Activated CD4-positive, alpha-beta memory T cell treated with anti-CD3 and anti-CD28 coated beads for 36 hours (primary cell): ENCODE measurements at regions of chr2 and their contacts with region 1.

Region 1: GRCh38 chr2:188524519-188525113 is 232.9 kb downstream of the GULP1 start:
- DNase-seq: peak; percentile 22
- H3K4me3 Mint-ChIP-seq: no peak overlapping the region
- H3K27ac Mint-ChIP-seq: no peak overlapping the region
- H3K4me1 Mint-ChIP-seq: no peaks in the 10 kb centered on the region
- H3K27me3 Mint-ChIP-seq: peaks cover 3% of the 10 kb centered on the region

Region 2: GRCh38 chr2:188629689-188630527 is 105.3 kb after region 1 on chr2:
- CTCF ChIA-PET with region 1: no interaction called
- POLR2A ChIA-PET with region 1: no interaction called
- intact Hi-C with region 1: no loop called
- DNase-seq: no peak
- H3K4me3 Mint-ChIP-seq: no peak overlapping the region
- H3K27ac Mint-ChIP-seq: no peak overlapping the region
- H3K4me1 Mint-ChIP-seq: no peaks in the 10 kb centered on the region
- H3K27me3 Mint-ChIP-seq: no peaks in the 10 kb centered on the region

Region 3: DNA sequence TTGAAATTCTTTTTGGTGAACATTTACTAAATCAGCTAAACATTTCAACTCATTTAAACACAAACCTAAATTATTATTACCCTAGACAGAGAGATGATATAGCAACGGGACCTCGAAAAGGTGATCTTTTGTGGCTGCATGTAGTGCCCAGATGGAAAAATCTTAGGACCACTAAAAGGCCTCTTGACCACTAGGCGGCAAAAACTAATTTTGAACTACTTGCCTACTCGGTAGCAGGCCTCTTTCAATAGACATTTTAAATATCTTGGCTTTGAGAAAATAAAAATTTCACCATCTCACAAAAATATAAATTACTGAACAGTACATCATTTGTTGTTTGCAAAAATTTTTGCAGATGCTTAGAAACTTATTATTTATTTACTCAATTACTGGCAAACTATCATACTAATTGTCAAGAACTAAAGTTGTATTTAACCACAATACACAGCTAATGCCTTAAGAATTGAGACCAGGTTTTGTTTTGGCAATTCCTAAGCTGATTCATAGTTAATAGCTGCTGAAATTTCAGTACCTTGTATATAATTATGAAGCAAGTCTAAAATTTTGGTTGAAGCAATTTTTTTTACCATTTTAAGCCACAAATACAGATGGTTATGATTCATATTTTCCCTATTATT is 458.9 kb after region 1 on chr2:
- CTCF ChIA-PET with region 1: interaction called, 18 read pairs
- POLR2A ChIA-PET with region 1: no interaction called
- intact Hi-C with region 1: loop called (anchors 1 kb)
- DNase-seq: no peak
- H3K4me3 Mint-ChIP-seq: no peak overlapping the region
- H3K27ac Mint-ChIP-seq: no peak overlapping the region
- H3K4me1 Mint-ChIP-seq: peaks cover 9% of the 10 kb centered on the region
- H3K27me3 Mint-ChIP-seq: no peaks in the 10 kb centered on the region

Region 4: GRCh38 chr2:189096769-189097447 is 572.3 kb after region 1 on chr2:
- CTCF ChIA-PET with region 1: interaction called, 3 read pairs
- POLR2A ChIA-PET with region 1: no interaction called
- intact Hi-C with region 1: loop called (anchors 10 kb)
- DNase-seq: no peak
- H3K4me3 Mint-ChIP-seq: no peak overlapping the region
- H3K27ac Mint-ChIP-seq: no peak overlapping the region
- H3K4me1 Mint-ChIP-seq: no peaks in the 10 kb centered on the region
- H3K27me3 Mint-ChIP-seq: no peaks in the 10 kb centered on the region